Activated CD8-positive, alpha-beta T cell treated with anti-CD3 and anti-CD28 coated beads for 36 hours (primary cell): ENCODE measurements at regions of chr1 and their contacts with region 1.

Region 1: DNA sequence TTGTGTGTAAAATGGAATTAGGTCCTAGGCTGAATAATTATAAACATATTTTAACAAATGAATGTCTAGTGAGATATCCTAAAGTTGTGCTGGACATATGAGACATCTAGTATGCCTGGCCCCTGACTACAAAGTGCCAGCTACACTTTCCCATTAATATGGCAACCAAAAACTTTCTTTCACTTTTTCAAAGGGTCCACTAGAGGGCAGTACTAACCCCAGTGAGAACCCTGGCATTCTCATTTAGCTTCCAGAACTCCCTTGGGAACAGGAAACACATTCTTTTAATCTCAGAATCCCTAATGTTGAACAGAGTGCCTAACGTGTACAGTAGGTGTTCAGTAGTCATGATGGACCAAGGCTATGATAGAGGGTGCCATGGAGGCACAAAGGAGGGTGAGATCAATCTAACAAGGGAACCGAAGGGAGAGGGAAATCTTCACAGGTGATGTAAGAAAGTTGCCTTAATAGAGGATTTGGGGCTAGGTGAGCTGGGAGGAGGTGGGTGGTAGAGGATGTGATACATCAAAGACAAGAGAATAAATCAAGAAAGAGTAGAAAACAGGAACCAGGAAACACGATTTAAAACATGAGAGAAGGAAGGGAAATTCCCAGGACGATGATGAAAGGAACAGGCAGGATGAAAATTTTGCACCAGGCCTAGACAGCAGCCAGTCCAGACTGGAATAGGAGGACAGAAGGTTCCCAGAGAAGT is 41.6 kb downstream of the NSL1 start:
- DNase-seq: no peak
- ATAC-seq: peak; percentile 35
- H3K4me3 Mint-ChIP-seq: peak overlapping the region; percentile 18
- H3K27ac Mint-ChIP-seq: peak overlapping the region; percentile 74
- H3K4me1 Mint-ChIP-seq: peaks cover 53% of the 10 kb centered on the region
- H3K27me3 Mint-ChIP-seq: no peaks in the 10 kb centered on the region
- CTCF ChIP-seq: peak; percentile 70

Region 2: DNA sequence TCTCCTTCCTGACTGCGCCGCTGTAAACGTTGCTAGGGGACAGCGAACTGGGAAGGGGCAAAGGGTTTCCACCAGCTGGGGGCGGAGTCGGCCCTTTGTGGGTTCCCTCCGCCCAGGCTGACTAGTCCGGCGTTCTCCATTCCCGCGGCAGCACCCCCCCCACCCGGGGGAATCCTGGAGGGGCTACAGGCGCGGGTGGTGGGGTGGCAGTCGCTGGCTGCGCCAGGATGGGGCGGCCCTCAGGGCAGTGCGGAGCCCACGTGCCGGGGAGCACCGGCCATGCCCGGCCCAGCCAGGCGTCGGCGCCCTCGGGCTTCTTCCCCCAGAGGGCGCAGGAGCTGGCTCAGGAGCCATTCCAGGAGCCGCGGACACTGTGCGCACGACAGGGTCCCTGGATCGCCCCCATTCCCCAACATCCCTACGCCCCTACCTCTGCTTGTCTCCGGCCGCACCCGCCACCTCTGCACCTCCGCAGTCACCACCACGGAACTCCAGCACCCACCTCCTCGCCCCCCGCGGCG is 50.8 kb before region 1 on chr1:
- CTCF ChIA-PET with region 1: interaction called, 17 read pairs
- POLR2A ChIA-PET with region 1: interaction called, 4 read pairs
- intact Hi-C with region 1: loop called (anchors 5 kb)
- DNase-seq: peak; percentile 75
- ATAC-seq: peak; percentile 75
- H3K4me3 Mint-ChIP-seq: peak overlapping the region; percentile 79
- H3K27ac Mint-ChIP-seq: peak overlapping the region; percentile 92
- H3K4me1 Mint-ChIP-seq: peaks cover 57% of the 10 kb centered on the region
- H3K27me3 Mint-ChIP-seq: peaks cover 1% of the 10 kb centered on the region
- CTCF ChIP-seq: peak; percentile 79

Region 3: GRCh38 chr1:212721388-212722247 is 28.4 kb before region 1 on chr1:
- CTCF ChIA-PET with region 1: interaction called, 10 read pairs
- POLR2A ChIA-PET with region 1: interaction called, 4 read pairs
- intact Hi-C with region 1: no loop called
- DNase-seq: peak; percentile 75
- ATAC-seq: peak; percentile 86
- H3K4me3 Mint-ChIP-seq: peak overlapping the region; percentile 44
- H3K27ac Mint-ChIP-seq: peak overlapping the region; percentile 65
- H3K4me1 Mint-ChIP-seq: peaks cover 28% of the 10 kb centered on the region
- H3K27me3 Mint-ChIP-seq: peaks cover 16% of the 10 kb centered on the region
- CTCF ChIP-seq: no peak

Region 4: GRCh38 chr1:212738330-212738729 is 11.6 kb before region 1 on chr1:
- CTCF ChIA-PET with region 1: interaction called, 48 read pairs
- POLR2A ChIA-PET with region 1: interaction called, 3 read pairs
- intact Hi-C with region 1: no loop called
- DNase-seq: no peak
- ATAC-seq: peak; percentile 69
- H3K4me3 Mint-ChIP-seq: no peak overlapping the region
- H3K27ac Mint-ChIP-seq: peak overlapping the region; percentile 76
- H3K4me1 Mint-ChIP-seq: peaks cover 25% of the 10 kb centered on the region
- H3K27me3 Mint-ChIP-seq: no peaks in the 10 kb centered on the region
- CTCF ChIP-seq: no peak

Region 5: DNA sequence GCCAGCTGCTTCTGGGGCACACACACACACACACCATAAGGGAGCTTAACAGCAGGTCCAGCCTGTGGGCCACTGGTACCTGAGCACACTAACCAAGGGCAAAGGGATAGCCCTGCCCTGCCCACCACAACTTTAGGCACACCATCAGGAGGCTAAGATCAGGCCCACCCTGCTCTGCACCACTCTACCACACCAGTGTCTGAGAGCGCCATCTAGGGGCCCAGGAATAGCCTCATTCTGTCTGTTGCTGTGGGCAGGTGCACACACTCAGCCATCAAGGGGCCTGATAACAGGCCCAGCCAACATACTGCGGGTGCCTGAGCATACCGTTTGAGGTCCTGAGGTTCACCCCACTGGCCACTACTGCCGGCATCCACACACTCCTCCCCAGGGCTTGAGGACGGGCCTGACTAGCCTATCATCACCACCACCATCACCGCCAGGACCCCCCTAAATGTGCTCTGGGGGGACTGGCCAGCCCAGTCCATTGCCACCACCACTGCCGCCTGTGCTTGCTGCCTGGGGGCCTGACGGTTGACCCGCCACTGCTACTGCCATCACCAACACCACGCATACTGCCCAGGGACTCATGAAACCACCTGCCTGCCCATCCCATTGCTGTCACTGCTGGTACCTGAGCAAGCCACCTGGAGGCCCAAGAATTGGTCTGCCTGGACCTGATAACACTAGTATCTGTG is 10.3 kb after region 1 on chr1:
- CTCF ChIA-PET with region 1: interaction called, 24 read pairs
- POLR2A ChIA-PET with region 1: interaction called, 3 read pairs
- intact Hi-C with region 1: no loop called
- DNase-seq: peak; percentile 76
- ATAC-seq: peak; percentile 96
- H3K4me3 Mint-ChIP-seq: no peak overlapping the region
- H3K27ac Mint-ChIP-seq: no peak overlapping the region
- H3K4me1 Mint-ChIP-seq: peaks cover 17% of the 10 kb centered on the region
- H3K27me3 Mint-ChIP-seq: no peaks in the 10 kb centered on the region
- CTCF ChIP-seq: peak; percentile 62

Region 6: DNA sequence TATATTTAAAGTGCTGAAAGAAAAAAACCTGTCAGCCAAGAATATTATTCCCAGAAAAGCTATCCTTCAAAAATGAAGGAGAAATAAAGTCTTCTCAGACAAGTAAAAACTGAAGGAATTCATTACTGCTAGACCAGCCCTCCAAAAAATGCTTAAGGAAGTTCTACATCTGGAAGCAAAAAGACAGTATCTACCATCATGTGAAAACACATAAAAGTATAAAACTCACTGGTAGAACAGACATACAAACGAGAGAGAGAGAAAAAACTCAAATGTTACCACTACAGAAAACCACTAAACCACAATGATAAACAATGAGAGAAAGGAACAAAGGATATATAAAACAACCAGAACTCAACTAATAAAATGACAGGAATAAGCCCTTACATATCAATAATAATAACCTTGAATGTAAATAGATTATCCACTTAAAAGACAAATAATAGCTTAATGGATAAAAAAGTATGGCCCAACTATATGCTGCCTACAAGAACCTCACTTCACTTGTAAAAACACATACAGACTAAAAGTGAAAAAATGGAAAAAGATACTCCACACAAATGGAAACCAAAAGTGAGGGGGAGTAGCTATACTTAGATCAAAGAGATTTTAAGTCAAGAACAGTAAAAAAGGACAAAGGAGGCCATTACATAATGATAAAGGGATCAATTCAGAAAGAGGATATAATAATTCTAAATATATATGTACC is 19.6 kb after region 1 on chr1:
- CTCF ChIA-PET with region 1: interaction called, 24 read pairs
- POLR2A ChIA-PET with region 1: interaction called, 5 read pairs
- intact Hi-C with region 1: loop called (anchors 1 kb)
- DNase-seq: no peak
- ATAC-seq: peak; percentile 91
- H3K4me3 Mint-ChIP-seq: peak overlapping the region; percentile 8
- H3K27ac Mint-ChIP-seq: peak overlapping the region; percentile 68
- H3K4me1 Mint-ChIP-seq: peaks cover 68% of the 10 kb centered on the region
- H3K27me3 Mint-ChIP-seq: no peaks in the 10 kb centered on the region
- CTCF ChIP-seq: no peak